HCT116 (cell line): ENCODE measurements at regions of chr15 and their contacts with region 1.

Region 1: GRCh38 chr15:29613951-29614382 is 208.3 kb downstream of the TJP1 start:
- DNase-seq: peak; percentile 33
- ATAC-seq: peak; percentile 98
- H3K4me3 ChIP-seq: no peak overlapping the region
- H3K27ac ChIP-seq: no peak overlapping the region
- H3K4me1 ChIP-seq: peaks cover 3% of the 10 kb centered on the region in 2 experiments; a peak in 2 of 4 replicates
- H3K27me3 ChIP-seq: no peaks in the 10 kb centered on the region
- CTCF ChIP-seq: peak; percentile 29 to 74 (median 72); a peak in 5 of 6 replicates
- POLR2A ChIP-seq: no peak
- RAD21 ChIP-seq: peak; percentile 45

Region 2: GRCh38 chr15:29451201-29451781 is 162.7 kb before region 1 on chr15:
- CTCF ChIA-PET with region 1: no interaction called
- POLR2A ChIA-PET with region 1: no interaction called
- RAD21 ChIA-PET with region 1: no interaction called
- intact Hi-C with region 1: no loop called
- DNase-seq: peak; percentile 7
- ATAC-seq: peak; percentile 79
- H3K4me3 ChIP-seq: no peak overlapping the region
- H3K27ac ChIP-seq: no peak overlapping the region; the same call in 1 of the 2 replicates
- H3K4me1 ChIP-seq: peaks cover 21 to 32% of the 10 kb centered on the region in 2 experiments; a peak in 3 of 4 replicates
- H3K27me3 ChIP-seq: peaks cover 10% of the 10 kb centered on the region
- CTCF ChIP-seq: peak; percentile 9 to 64 (median 48); a peak in 4 of 6 replicates
- POLR2A ChIP-seq: no peak
- RAD21 ChIP-seq: peak; percentile 24; the same call in 1 of the 2 replicates

Region 3: DNA sequence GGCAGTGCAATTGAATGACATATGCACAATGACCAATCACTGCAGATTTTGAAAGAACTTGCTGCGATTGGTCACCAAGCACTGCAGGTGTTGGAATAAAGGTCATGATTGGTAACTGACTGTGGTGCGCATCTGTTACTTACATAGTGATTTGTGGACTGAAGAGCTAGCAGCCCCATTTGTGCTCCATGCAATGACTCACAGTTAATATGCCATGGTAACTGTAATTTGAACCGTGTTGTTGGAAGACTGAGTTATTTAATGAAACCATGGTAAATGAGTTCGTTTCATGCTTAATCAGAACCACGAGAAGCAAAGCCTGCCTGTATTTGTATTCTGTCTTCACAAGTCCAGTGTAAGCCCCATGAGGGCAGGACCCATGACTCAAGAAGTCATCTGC is 12.2 kb before region 1 on chr15:
- CTCF ChIA-PET with region 1: interaction called, 11 read pairs
- POLR2A ChIA-PET with region 1: no interaction called
- RAD21 ChIA-PET with region 1: no interaction called
- intact Hi-C with region 1: no loop called
- DNase-seq: no peak
- ATAC-seq: no peak
- H3K4me3 ChIP-seq: no peak overlapping the region
- H3K27ac ChIP-seq: no peak overlapping the region
- H3K4me1 ChIP-seq: no peaks in the 10 kb centered on the region
- H3K27me3 ChIP-seq: no peaks in the 10 kb centered on the region
- CTCF ChIP-seq: no peak
- POLR2A ChIP-seq: no peak
- RAD21 ChIP-seq: no peak

Region 4: DNA sequence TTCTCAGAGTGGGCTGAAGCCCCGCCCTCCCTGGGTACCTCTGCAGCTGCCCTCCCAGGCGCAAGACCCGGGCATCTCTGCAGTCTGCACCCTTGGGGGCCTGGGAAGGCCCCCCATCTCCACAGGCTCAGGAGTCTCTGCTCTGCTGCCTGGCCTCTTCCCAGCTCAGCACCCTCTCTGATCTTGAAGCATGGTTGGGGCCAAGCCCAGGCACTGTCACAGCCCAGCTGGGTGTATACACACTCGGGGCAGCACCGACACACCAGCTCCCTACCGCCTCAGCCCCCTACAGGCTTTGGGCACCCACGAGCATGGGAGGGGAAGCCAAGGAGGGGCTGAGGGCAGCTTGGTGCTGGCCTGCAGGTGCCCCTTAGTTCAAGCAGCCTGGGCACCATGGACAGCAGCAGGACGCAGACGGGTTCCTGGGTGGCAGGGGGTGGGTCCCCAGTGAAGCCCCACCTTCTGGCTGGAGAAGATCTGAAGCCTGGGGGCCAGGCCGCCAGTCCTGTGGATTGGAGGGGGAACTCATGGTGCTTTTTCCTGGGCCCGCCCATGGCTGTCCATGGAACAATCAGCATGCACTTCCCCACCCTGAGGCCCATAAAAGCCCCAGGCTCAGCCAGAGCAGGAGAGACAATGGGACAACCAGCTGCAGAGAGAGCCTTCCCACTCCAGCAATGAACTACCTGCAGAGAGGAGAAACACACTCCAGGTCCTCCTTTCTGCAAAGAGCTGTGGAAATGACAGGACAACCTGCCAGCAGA is 37.7 kb after region 1 on chr15:
- CTCF ChIA-PET with region 1: interaction called, 13 read pairs
- POLR2A ChIA-PET with region 1: no interaction called
- RAD21 ChIA-PET with region 1: no interaction called
- intact Hi-C with region 1: loop called (anchors 5 kb)
- DNase-seq: no peak
- ATAC-seq: no peak
- H3K4me3 ChIP-seq: no peak overlapping the region
- H3K27ac ChIP-seq: no peak overlapping the region
- H3K4me1 ChIP-seq: peaks cover 1 to 4% of the 10 kb centered on the region in 2 experiments; a peak in 3 of 4 replicates
- H3K27me3 ChIP-seq: no peaks in the 10 kb centered on the region
- CTCF ChIP-seq: no peak
- POLR2A ChIP-seq: no peak
- RAD21 ChIP-seq: no peak

Region 5: DNA sequence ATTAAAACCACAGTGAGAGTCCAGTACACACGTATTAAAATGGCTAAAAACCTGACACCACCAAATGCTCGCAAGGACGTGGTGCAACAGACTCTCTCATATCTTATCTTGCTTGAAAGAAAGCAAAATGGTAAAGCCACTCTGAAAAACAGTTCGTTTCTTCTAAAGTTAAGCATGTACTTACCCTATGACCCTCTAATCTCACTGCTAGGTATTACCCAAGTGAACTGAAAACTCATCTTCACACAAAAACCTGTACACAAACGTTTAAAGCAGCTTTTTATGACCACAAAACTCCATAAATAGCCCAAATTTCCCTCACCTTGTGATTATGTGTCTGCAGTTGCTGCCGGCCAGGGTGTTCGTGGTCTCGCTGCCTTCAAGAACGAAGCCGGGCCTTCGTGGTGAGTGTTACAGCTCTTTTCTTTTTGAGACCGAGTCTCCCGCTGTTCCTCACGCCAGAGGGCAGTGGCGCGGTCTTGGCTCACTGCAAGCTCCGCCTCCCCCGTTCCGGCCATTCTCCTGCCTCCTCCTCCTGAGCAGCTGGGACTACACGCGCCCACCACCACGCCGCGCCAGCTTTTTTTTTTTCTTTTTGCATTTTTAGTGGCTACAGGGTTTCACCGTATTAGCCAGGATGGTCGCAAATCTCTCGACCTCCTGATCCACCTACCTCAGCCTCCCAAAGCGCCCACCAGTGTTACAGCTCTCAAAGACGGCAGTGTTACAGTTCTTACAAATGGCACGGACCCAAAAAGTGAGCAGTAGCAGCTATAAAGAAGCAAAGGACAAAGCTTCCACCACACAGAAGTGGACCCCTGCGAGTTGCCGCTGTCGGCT is 42.9 kb after region 1 on chr15:
- CTCF ChIA-PET with region 1: interaction called, 13 read pairs
- POLR2A ChIA-PET with region 1: no interaction called
- RAD21 ChIA-PET with region 1: no interaction called
- intact Hi-C with region 1: loop called (anchors 5 kb)
- DNase-seq: peak; percentile 74
- ATAC-seq: peak; percentile 99
- H3K4me3 ChIP-seq: peak overlapping the region; percentile 27 to 54
- H3K27ac ChIP-seq: no peak overlapping the region
- H3K4me1 ChIP-seq: peaks cover 3 to 10% of the 10 kb centered on the region in 2 experiments; a peak in 3 of 4 replicates
- H3K27me3 ChIP-seq: no peaks in the 10 kb centered on the region
- CTCF ChIP-seq: peak; percentile 28 to 58 (median 48); a peak in 5 of 6 replicates
- POLR2A ChIP-seq: no peak
- RAD21 ChIP-seq: peak; percentile 27; the same call in 1 of the 2 replicates